ENCODE measurements at regions of chr11 and their contacts with region 1.

Region 1: GRCh38 chr11:130434521-130435223 is 6.3 kb upstream of the ADAMTS8 start:
- DNase-seq: peak; percentile 73 to 79 (median 74)
- ATAC-seq: peak; percentile 96 to 98 (median 97)
- H3K4me3 ChIP-seq: peak overlapping the region; percentile 51 to 68 (median 58)
- H3K27ac ChIP-seq: peak overlapping the region; percentile 24 to 62 (median 41)
- H3K4me1 ChIP-seq: no peaks in the 10 kb centered on the region
- H3K27me3 ChIP-seq: peaks cover 0 to 6% of the 10 kb centered on the region in 2 donors
- CTCF ChIP-seq: peak; percentile 68 to 87 (median 78)
- POLR2A ChIP-seq: no peak

Region 2: DNA sequence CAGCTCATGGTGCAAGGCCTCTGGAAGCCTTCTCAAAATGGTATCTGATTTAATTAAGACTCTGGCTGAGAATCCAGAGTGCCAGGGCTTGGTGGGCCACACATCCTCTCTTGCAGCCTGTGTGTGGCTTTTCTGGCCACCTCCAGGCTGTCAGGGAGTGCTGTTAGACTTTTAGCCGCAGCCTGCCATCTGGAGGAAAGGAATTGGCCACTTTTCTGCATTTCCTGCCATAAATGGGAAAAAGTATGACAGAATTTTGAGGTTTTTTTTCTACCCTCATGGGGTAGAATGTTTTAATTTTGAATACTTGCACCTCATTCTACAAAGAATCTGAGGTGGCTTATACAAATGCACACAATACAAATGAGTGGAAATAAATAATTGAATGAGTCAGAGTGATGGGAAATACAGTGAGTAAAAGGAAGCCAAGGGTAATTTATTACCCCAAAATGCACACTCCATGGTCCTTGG is 232.1 kb after region 1 on chr11:
- intact Hi-C with region 1: loop called in 1 of 2 experiments (anchors 10 kb)
- DNase-seq: no peak
- ATAC-seq: peak in 2 of 4 donors; percentile 44 to 53
- H3K4me3 ChIP-seq: no peak overlapping the region
- H3K27ac ChIP-seq: no peak overlapping the region
- H3K4me1 ChIP-seq: no peaks in the 10 kb centered on the region
- H3K27me3 ChIP-seq: no peaks in the 10 kb centered on the region
- CTCF ChIP-seq: peak in 3 of 4 donors; percentile 11 to 30 (median 27)
- POLR2A ChIP-seq: no peak